ENCODE measurements at regions of chr15 and their contacts with region 1.

Region 1: GRCh38 chr15:27328608-27329007 is 357.6 kb downstream of the GABRG3 start:
- DNase-seq: no peak
- H3K4me3 ChIP-seq: no peak overlapping the region
- H3K4me3 Mint-ChIP-seq: no peak overlapping the region
- H3K27ac Mint-ChIP-seq: no peak overlapping the region
- H3K4me1 ChIP-seq: no peaks in the 10 kb centered on the region
- H3K4me1 Mint-ChIP-seq: no peaks in the 10 kb centered on the region
- H3K27me3 ChIP-seq: no peaks in the 10 kb centered on the region
- H3K27me3 Mint-ChIP-seq: no peaks in the 10 kb centered on the region
- CTCF ChIP-seq: no peak

Region 2: DNA sequence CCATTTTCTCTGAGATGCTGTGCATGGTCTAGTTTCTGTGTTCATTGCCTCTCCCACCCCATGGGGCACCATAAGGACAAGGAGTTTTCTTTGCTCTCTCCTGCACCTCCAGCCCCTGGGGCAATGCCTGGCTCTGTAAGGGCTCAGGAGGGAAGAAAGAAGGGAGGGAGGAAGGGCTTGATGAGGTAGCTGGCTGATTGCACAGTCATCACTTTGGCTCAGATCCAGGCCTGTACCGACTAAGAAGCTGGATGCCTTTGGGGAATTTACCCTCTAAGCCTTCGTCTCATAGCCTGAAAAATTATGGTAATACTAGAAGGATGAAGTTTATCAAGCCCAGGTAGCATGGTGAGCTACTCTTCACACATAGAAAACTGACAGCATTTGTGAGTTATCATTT is 25.2 kb after region 1 on chr15:
- CTCF ChIA-PET with region 1: no interaction called
- POLR2A ChIA-PET with region 1: no interaction called
- intact Hi-C with region 1: loop called (anchors 1 kb)
- DNase-seq: no peak
- H3K4me3 ChIP-seq: no peak overlapping the region
- H3K4me3 Mint-ChIP-seq: no peak overlapping the region
- H3K27ac Mint-ChIP-seq: no peak overlapping the region
- H3K4me1 ChIP-seq: no peaks in the 10 kb centered on the region
- H3K4me1 Mint-ChIP-seq: no peaks in the 10 kb centered on the region
- H3K27me3 ChIP-seq: no peaks in the 10 kb centered on the region
- H3K27me3 Mint-ChIP-seq: no peaks in the 10 kb centered on the region
- CTCF ChIP-seq: no peak

Measured in Caco-2 (cell line).